ENCODE measurements at regions of chr2 and their contacts with region 1.

Region 1: DNA sequence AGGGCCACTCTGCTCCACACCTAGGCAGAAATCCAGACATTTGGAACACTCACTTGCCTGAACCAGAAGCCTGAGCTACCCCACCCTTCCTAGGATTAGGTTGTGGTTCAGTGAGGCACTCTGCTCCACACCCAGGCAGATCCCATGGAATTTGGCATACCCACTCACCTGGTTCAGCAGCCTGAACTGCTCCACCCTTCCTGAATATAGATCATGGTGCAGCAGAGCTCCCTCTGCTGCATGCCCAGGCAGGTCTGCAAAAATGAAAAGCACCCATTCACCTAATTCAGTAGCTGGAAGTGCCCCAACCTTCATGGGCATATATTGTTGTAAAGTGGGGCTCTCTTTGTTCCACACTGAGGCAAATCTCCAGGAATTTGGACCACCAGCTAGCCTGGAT is 185.1 kb upstream of the CNTNAP5 start:
- DNase-seq: no peak
- H3K4me3 ChIP-seq: no peak overlapping the region
- CTCF ChIP-seq: no peak

Region 2: DNA sequence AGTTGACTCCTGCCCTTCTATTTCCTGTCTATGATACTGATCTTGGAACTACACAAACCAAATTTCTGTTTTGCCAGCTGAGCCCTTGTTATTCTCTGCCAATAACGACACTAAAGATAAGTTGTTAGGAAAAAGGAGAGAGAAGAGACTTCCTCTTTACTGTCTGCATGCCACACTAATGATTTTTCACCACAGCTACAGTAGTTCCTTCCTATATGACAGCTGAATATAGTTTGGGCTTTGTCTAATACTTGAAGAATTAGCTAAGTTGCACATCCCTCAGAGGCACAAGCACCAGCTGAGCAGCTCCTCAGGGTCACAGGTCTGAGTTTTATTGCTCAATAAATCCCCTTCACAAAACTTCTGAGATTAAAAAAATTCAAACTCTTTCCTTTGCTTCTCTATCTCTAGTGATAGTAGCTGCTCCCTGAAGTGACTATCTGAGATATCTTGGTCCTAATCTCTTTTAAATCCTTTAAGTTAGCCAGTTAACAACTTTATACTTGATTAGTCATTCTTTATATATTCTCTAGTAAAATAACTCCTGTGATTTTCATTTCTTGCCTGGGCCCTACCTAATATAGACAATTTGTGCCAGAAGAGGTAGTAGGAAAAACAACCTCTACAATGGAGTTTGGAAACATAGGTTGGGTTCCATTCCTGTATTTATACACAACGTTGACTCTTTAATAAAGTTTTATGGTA is 67.9 kb before region 1 on chr2:
- in situ Hi-C with region 1: no loop called
- DNase-seq: no peak
- H3K4me3 ChIP-seq: no peak overlapping the region
- CTCF ChIP-seq: no peak

Region 3: DNA sequence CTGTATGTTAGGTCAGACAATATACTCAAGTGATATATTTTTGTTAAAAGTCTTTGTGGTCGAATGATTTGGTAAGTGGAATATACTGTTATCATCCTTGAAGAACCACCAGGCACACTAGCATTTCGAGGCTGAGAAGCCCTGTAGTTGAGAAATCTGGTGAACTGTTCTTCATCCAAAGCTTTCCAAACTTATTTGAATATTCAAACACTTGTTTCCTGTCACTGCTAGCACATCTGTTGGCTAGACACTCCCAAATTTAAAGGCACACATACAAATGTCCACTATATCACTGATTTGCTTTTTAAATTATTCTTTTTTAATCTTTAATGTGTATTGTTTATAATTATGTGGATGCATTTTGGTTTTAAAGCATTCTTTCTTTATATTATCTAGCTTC is 56.9 kb before region 1 on chr2:
- in situ Hi-C with region 1: no loop called
- DNase-seq: no peak
- H3K4me3 ChIP-seq: no peak overlapping the region
- CTCF ChIP-seq: no peak

Region 4: DNA sequence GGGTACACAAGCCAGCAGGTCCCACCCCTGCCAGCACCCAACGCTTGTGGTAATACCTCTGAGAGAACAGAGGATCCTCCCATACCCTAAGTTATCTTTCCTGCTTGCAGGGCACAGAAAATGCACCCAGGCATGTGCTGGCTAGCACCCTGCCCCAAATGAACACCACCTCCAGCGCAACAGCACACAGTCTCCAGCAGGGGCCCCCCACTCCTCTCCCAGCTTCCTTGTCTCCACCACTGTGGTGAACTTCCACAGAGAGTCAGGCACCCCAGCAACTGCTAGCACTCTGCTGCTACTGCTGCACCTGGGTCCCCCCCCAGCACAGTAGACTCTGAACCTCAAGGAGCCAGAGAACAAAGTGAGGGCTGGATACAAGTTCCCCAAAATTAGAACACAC is 31.8 kb before region 1 on chr2:
- in situ Hi-C with region 1: loop called (anchors 5 kb)
- DNase-seq: no peak
- H3K4me3 ChIP-seq: no peak overlapping the region
- CTCF ChIP-seq: no peak

Region 5: GRCh38 chr2:123895646-123896045 is 55.6 kb after region 1 on chr2:
- in situ Hi-C with region 1: no loop called
- DNase-seq: no peak
- H3K4me3 ChIP-seq: no peak overlapping the region
- CTCF ChIP-seq: no peak